ENCODE measurements at regions of chr15 and their contacts with region 1.

Region 1: GRCh38 chr15:78315686-78316282 is 16.4 kb upstream of the SKIC8 start:
- DNase-seq: no peak
- ATAC-seq: peak; percentile 78
- H3K4me3 ChIP-seq: no peak overlapping the region
- H3K27ac ChIP-seq: no peak overlapping the region
- H3K4me1 ChIP-seq: no peaks in the 10 kb centered on the region; the same call in 1 of the 2 replicates
- H3K27me3 ChIP-seq: no peaks in the 10 kb centered on the region
- CTCF ChIP-seq: peak; percentile 32 to 55 (median 40); a peak in 4 of 6 replicates
- EP300 ChIP-seq: no peak
- POLR2A ChIP-seq: no peak
- RAD21 ChIP-seq: peak; percentile 57

Region 2: GRCh38 chr15:78368651-78369050 is 52.9 kb after region 1 on chr15:
- CTCF ChIA-PET with region 1: no interaction called
- POLR2A ChIA-PET with region 1: no interaction called
- RAD21 ChIA-PET with region 1: no interaction called
- SMC1A ChIA-PET with region 1: no interaction called
- in situ Hi-C with region 1: no loop called
- intact Hi-C with region 1: no loop called
- DNase-seq: no peak
- ATAC-seq: no peak
- H3K4me3 ChIP-seq: no peak overlapping the region
- H3K27ac ChIP-seq: no peak overlapping the region
- H3K4me1 ChIP-seq: no peaks in the 10 kb centered on the region
- H3K27me3 ChIP-seq: no peaks in the 10 kb centered on the region; a peak in 2 of 4 replicates
- CTCF ChIP-seq: no peak
- EP300 ChIP-seq: no peak
- POLR2A ChIP-seq: no peak
- RAD21 ChIP-seq: no peak

Region 3: DNA sequence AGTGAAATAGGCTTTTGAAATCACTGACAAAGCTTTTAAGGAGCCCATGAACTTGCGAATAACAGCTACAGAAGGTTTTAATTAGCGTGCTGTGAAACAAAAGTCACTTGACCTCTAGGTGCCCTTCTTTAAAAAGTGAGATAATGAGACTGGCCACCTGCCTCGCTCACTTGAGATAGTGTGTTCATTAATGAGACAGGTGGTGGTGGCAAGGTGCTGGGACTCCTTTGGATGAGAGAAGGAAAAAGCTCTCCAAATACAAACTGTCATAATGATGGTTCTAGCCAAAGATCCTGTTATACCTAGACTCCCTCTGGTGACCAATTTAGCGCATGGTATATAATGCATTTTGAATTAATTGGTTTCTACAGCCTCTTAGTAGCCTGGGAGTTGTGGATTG is 99.5 kb after region 1 on chr15:
- CTCF ChIA-PET with region 1: interaction called, 175 read pairs
- POLR2A ChIA-PET with region 1: no interaction called
- RAD21 ChIA-PET with region 1: interaction called, 3 read pairs
- SMC1A ChIA-PET with region 1: interaction called, 4 read pairs
- in situ Hi-C with region 1: loop called (anchors 10 kb)
- intact Hi-C with region 1: no loop called
- DNase-seq: no peak
- ATAC-seq: peak; percentile 70
- H3K4me3 ChIP-seq: no peak overlapping the region
- H3K27ac ChIP-seq: no peak overlapping the region
- H3K4me1 ChIP-seq: no peaks in the 10 kb centered on the region
- H3K27me3 ChIP-seq: no peaks in the 10 kb centered on the region; a peak in 1 of 4 replicates
- CTCF ChIP-seq: peak in 1 of 3 experiments; percentile 41; a peak in 2 of 6 replicates
- EP300 ChIP-seq: no peak
- POLR2A ChIP-seq: no peak
- RAD21 ChIP-seq: peak; percentile 46

Region 4: DNA sequence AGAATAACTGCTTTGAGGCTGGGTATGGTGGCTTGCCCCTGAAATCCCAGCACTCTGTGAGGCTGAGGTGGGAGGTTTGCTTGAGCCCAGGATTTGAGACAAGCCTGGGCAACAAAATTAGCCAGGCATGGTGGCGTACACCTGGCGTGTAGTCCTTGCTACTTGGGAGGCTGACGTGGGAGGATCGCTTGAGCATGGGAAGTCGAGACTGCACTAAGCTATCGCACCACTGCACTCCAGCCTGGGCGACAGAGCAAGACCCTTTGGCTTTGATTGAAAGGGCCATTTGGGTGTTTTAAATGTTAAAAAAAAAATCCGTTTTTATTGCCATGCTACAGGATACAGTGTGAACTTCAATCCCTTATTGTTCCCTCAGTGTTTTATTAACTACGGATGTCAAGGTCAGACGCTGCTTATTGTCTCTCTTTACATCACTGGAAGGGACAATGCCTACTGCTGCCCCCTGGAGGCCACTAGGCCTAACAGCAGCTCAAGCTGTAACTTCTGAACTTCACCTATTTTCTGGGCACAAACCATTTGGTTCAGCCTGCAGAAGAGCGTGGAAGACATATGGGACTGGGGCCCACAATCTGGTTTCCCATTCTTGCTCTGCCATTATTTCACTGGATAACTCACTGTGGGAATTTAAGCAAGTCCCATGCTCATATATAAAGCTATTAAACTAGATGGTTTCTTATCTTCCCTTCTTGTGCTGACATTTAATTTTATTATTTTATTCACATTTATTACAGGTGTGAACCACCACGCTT is 107.0 kb after region 1 on chr15:
- CTCF ChIA-PET with region 1: interaction called, 175 read pairs
- POLR2A ChIA-PET with region 1: no interaction called
- RAD21 ChIA-PET with region 1: interaction called, 8 read pairs
- SMC1A ChIA-PET with region 1: interaction called, 12 read pairs
- in situ Hi-C with region 1: loop called (anchors 10 kb)
- intact Hi-C with region 1: no loop called
- DNase-seq: no peak
- ATAC-seq: peak; percentile 90
- H3K4me3 ChIP-seq: no peak overlapping the region
- H3K27ac ChIP-seq: no peak overlapping the region
- H3K4me1 ChIP-seq: no peaks in the 10 kb centered on the region
- H3K27me3 ChIP-seq: no peaks in the 10 kb centered on the region
- CTCF ChIP-seq: peak; percentile 90 to 94 (median 94)
- EP300 ChIP-seq: no peak
- POLR2A ChIP-seq: no peak
- RAD21 ChIP-seq: peak; percentile 69